HEK293 (cell line): ENCODE measurements at regions of chr14 and their contacts with region 1.

Region 1: GRCh38 chr14:94689218-94689984 is 77.2 kb downstream of the SERPINA3 start:
- H3K4me3 ChIP-seq: no peak overlapping the region
- H3K27ac ChIP-seq: no peak overlapping the region
- H3K4me1 ChIP-seq: no peaks in the 10 kb centered on the region
- CTCF ChIP-seq: peak; percentile 89

Region 2: DNA sequence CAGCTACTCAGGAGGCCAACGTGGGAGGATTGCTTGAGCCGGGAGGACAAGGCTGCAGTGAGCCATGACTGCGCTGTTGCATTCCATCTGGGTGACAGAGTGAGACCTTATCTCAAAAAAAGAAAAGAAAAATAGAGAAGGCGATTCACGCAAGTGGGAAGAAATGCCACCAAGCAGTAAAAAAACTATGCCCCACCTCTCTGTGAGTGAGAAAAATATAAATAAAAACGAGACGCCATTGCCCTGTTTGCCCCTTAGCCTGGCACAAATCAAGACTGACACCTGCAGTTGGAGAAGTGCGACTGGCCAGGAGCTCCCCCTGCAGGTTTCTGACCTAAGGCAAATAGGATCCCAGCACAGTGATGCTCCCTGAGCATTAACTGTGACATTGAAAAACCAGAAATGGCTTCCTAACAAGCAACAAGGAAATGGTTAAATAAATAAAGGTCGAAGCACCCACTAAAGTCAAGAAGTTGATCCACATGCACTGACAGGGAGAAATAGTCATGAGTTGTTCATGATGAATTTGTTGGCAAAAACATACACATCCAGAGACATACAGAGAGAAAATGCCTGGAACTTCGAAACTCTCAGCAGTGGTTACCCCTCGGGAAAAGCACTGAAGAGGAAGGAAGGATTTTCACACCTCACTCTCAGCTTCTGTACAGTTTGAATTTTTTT is 59.4 kb after region 1 on chr14:
- CTCF ChIA-PET with region 1: interaction called, 33 read pairs
- POLR2A ChIA-PET with region 1: no interaction called
- H3K4me3 ChIP-seq: no peak overlapping the region
- H3K27ac ChIP-seq: no peak overlapping the region
- H3K4me1 ChIP-seq: no peaks in the 10 kb centered on the region
- CTCF ChIP-seq: peak; percentile 88